ENCODE measurements at regions of chr5 and their contacts with region 1.

Region 1: DNA sequence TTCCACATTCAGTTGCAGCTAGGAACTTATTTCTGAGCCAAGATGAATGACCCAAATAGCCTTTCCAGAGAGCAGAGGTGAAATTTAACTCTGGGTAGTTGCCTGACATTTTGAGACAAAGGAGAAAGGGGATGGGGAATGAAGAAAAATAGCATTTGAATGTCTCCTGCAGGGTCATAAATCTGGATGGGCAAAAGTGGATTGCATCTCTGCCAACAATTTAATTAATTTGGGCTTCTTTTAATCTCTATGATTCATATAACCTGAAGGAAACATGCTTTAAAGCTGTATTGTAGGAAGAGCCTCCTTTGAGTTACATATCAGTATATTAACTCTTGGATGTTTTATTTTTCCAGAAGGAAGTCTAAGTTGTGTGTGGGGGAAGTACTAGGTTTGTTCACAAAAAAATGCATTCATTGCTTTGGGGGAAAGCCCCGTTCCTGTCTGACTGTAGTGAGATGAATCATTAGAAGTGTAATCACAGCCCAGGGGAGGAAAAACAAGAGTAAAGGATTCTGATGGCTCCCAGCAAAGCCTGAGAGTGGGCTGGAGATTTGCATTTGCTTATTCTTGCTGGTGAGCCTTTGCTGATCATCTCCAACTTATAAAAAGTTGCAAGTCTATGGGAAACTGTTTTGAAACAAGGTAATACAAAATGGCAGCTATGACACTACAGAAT is 133.0 kb upstream of the IQGAP2 start:
- DNase-seq: no peak
- ATAC-seq: no peak
- H3K4me3 Mint-ChIP-seq: no peak overlapping the region
- H3K27ac Mint-ChIP-seq: peak overlapping the region; percentile 11
- H3K4me1 Mint-ChIP-seq: peaks cover 21% of the 10 kb centered on the region
- H3K27me3 Mint-ChIP-seq: no peaks in the 10 kb centered on the region

Region 2: DNA sequence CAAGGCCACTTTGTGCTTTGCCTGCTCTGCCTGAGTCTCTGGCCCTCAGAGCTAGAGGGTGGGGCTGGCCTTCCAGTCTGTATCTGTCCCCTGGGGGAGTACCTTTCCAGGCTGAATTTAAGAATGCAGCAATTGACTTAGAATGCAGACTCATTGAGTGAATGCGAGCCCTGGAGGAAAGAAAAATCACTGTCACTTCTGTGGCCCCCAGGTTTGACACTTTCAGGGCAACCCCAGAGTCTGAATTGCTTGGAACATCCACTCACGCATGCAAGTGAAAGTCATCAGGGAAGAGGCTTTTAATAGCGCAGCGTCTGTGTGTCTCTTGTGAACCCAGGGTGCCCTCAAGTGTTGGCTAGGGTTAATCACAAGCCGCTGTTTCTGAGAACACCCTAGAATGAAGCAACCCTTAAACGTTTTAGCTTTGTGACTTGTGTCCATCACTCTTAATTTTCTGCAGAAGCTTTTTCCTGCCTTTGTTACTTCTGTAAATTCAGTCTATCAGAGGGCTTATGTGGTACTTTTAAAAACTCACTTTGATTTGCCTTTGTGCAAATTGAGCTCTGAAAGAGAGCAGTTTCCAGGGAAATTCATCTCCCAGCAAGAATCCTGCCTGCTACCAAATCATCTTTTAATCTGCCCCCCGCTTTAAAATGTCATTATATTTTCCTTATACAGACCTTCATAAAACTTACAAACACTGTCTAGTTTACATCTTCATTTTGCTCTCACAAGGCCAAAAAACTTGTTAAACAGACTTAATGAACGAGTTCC is 13.8 kb before region 1 on chr5:
- CTCF ChIA-PET with region 1: interaction called, 17 read pairs
- POLR2A ChIA-PET with region 1: no interaction called
- DNase-seq: peak; percentile 79
- ATAC-seq: peak; percentile 96
- H3K4me3 Mint-ChIP-seq: no peak overlapping the region
- H3K27ac Mint-ChIP-seq: no peak overlapping the region
- H3K4me1 Mint-ChIP-seq: peaks cover 9% of the 10 kb centered on the region
- H3K27me3 Mint-ChIP-seq: peaks cover 15% of the 10 kb centered on the region

Region 3: DNA sequence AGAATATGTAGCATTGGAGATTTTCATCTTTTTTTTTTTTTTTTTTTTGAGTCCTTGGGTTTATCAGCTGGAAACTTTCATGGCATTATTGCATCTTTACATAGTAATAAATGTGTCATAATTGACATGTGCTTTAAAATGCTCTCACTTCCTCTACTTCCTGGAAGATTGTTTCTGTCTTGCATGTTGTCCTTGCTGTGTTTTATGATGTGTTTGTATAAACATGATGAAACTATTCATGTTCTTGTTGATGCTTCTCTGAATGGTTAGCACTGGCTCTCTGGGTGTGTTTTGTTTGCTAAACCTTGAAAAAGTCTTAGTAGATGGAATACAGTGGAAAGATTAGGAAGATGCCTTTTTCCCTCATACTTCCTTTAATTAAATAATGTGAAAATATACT is 220.9 kb after region 1 on chr5:
- CTCF ChIA-PET with region 1: no interaction called
- POLR2A ChIA-PET with region 1: no interaction called
- DNase-seq: no peak
- ATAC-seq: no peak
- H3K4me3 Mint-ChIP-seq: no peak overlapping the region
- H3K27ac Mint-ChIP-seq: no peak overlapping the region
- H3K4me1 Mint-ChIP-seq: peaks cover 6% of the 10 kb centered on the region
- H3K27me3 Mint-ChIP-seq: no peaks in the 10 kb centered on the region

Measured in activated CD8-positive, alpha-beta T cell treated with anti-CD3 and anti-CD28 coated beads, Interleukin-2, amount 10 ng/mL, durations not matched to agents 7 days and 5 days (primary cell).